ENCODE measurements at regions of chr11 and their contacts with region 1.

Region 1: DNA sequence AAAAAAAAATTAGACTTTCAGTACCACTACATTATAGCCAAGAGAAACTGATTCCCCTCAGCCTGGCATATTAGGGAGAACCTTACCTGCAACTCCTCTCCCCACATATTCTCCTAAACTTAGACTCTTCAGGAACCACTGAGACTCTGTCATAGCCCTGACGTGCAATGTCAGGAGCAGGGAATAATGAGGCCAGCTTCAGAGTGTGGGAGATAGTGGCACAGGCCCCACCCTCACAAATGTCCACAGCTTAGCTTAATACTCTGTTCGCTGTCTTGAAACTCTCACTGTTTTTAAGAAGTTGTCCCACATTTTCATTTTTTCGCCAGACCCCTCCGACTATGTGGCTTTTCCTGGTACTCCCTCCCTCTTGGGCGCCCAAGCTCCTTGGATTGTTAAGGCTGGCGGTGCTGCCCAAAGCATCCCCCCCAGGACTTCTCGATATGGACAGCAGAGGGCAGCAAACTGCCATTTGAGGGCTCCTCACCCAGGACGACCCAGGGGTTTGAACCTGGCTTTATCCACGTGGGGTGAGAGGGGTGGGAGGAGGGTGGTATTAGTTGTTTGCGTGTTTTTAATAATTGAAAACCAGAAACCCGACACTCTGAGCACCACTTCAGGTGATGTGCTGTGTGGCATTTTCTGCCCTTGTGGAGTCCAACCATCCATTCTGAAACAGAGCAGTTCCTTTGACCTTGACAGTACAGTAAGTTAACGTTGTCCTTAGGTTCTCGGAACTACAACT is 45.2 kb upstream of the RASSF10 start:
- DNase-seq: no peak
- ATAC-seq: peak; percentile 80

Region 2: GRCh38 chr11:12922980-12923507 is 40.9 kb before region 1 on chr11:
- intact Hi-C with region 1: no loop called
- DNase-seq: no peak
- ATAC-seq: no peak

Region 3: GRCh38 chr11:13152736-13153533 is 189.0 kb after region 1 on chr11:
- intact Hi-C with region 1: loop called (anchors 5 kb)
- DNase-seq: no peak
- ATAC-seq: no peak

Region 4: GRCh38 chr11:13183094-13183825 is 219.3 kb after region 1 on chr11:
- intact Hi-C with region 1: loop called (anchors 10 kb)
- DNase-seq: no peak
- ATAC-seq: no peak

Measured in Right ventricle myocardium inferior (tissue), 1 donor.